GM12878 (cell line): ENCODE measurements at regions of chr14 and their contacts with region 1.

Region 1: GRCh38 chr14:78448164-78449094 is 278.3 kb downstream of the NRXN3 start:
- DNase-seq: peak; percentile 45
- ATAC-seq: peak; percentile 87
- H3K4me3 ChIP-seq: no peak overlapping the region
- H3K27ac ChIP-seq: no peak overlapping the region
- H3K4me1 ChIP-seq: peaks cover 5% of the 10 kb centered on the region
- H3K27me3 ChIP-seq: no peaks in the 10 kb centered on the region
- CTCF ChIP-seq: peak; percentile 68 to 91 (median 89)
- EP300 ChIP-seq: no peak
- POLR2A ChIP-seq: no peak
- RAD21 ChIP-seq: peak; percentile 73

Region 2: GRCh38 chr14:78561069-78561468 is 112.6 kb after region 1 on chr14:
- CTCF ChIA-PET with region 1: interaction called, 39 read pairs
- POLR2A ChIA-PET with region 1: no interaction called
- RAD21 ChIA-PET with region 1: interaction called, 14 read pairs
- SMC1A ChIA-PET with region 1: interaction called, 12 read pairs
- in situ Hi-C with region 1: loop called (anchors 5 kb)
- intact Hi-C with region 1: loop called (anchors 1 kb)
- DNase-seq: no peak
- ATAC-seq: no peak
- H3K4me3 ChIP-seq: no peak overlapping the region
- H3K27ac ChIP-seq: no peak overlapping the region
- H3K4me1 ChIP-seq: no peaks in the 10 kb centered on the region
- H3K27me3 ChIP-seq: no peaks in the 10 kb centered on the region
- CTCF ChIP-seq: no peak
- EP300 ChIP-seq: no peak
- POLR2A ChIP-seq: no peak
- RAD21 ChIP-seq: no peak

Region 3: DNA sequence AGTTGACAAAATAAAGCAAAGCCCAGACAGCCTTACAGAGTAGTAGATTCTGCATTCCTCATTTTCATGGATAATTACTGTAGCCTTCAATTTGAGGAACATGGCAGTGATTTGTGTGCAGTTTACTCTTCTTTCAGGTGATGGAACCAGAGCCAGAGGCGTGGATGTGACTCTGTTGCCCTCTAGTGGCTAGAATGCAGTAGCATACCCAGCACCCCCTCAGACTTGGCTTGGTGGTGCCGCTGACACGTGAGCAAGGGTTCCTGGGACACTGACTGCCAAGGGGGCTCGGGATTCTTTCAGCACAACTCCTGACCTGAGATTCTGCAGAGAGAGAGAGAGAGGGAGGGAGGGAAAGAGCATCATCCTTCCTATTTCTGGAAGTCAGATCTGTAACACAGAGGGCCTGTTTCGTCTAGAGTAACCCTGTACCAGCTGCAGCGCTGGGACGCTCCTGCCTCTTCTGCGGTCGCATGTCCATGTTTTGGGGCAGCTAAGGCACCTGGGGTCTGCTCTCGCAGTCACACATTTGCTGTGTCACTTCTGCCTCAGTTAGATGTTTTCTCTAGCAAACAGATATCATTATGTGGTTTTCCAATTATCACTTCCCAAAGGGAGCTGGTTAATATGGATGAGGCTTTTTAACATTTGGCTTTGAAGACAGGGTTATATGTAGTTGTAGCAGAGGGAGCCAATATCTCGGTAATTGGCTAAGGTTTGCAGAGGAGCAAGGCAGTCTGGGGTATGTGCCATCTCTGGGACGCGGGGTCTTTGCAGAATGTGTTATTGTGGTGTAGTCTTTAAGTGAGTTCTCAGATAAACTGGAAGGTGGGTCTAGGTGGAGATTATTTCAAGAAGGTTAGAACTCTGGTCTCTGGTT is 149.9 kb after region 1 on chr14:
- CTCF ChIA-PET with region 1: interaction called, 14 read pairs
- POLR2A ChIA-PET with region 1: no interaction called
- RAD21 ChIA-PET with region 1: interaction called, 4 read pairs
- SMC1A ChIA-PET with region 1: interaction called, 9 read pairs
- in situ Hi-C with region 1: no loop called
- intact Hi-C with region 1: loop called (anchors 2 kb)
- DNase-seq: no peak
- ATAC-seq: peak; percentile 99
- H3K4me3 ChIP-seq: no peak overlapping the region
- H3K27ac ChIP-seq: no peak overlapping the region
- H3K4me1 ChIP-seq: no peaks in the 10 kb centered on the region
- H3K27me3 ChIP-seq: no peaks in the 10 kb centered on the region
- CTCF ChIP-seq: peak; percentile 94 to 96 (median 94)
- EP300 ChIP-seq: no peak
- POLR2A ChIP-seq: no peak
- RAD21 ChIP-seq: peak; percentile 87

Region 4: GRCh38 chr14:78697341-78697740 is 248.9 kb after region 1 on chr14:
- CTCF ChIA-PET with region 1: interaction called, 3 read pairs
- POLR2A ChIA-PET with region 1: no interaction called
- RAD21 ChIA-PET with region 1: no interaction called
- SMC1A ChIA-PET with region 1: no interaction called
- in situ Hi-C with region 1: no loop called
- intact Hi-C with region 1: loop called (anchors 1 kb)
- DNase-seq: no peak
- ATAC-seq: peak; percentile 67
- H3K4me3 ChIP-seq: no peak overlapping the region
- H3K27ac ChIP-seq: no peak overlapping the region
- H3K4me1 ChIP-seq: no peaks in the 10 kb centered on the region
- H3K27me3 ChIP-seq: no peaks in the 10 kb centered on the region
- CTCF ChIP-seq: peak; percentile 47 to 53 (median 52)
- EP300 ChIP-seq: no peak
- POLR2A ChIP-seq: no peak
- RAD21 ChIP-seq: peak; percentile 65

Region 5: DNA sequence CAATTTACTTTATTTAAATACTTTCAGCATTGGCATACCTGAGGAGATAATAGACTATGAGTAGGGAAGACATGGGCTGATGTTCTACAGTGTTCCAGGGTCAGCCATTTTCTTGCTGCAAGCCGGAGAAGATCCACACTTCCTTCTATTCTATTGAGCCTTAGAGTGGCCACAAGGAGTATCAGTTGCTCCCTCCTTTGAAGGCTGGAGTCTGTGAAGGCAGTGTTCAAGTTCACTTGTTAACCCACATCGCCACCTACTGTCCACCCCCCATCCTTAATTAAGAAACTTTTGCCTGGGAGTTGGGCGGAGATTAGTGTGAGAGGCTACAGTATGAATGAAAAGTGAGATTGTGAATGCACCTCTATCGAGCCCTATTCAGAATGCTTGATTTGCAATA is 388.3 kb after region 1 on chr14:
- CTCF ChIA-PET with region 1: interaction called, 3 read pairs
- POLR2A ChIA-PET with region 1: no interaction called
- RAD21 ChIA-PET with region 1: no interaction called
- SMC1A ChIA-PET with region 1: no interaction called
- in situ Hi-C with region 1: no loop called
- intact Hi-C with region 1: loop called (anchors 1 kb)
- DNase-seq: peak; percentile 17
- ATAC-seq: peak; percentile 91
- H3K4me3 ChIP-seq: no peak overlapping the region
- H3K27ac ChIP-seq: no peak overlapping the region
- H3K4me1 ChIP-seq: no peaks in the 10 kb centered on the region
- H3K27me3 ChIP-seq: no peaks in the 10 kb centered on the region
- CTCF ChIP-seq: peak; percentile 51 to 67 (median 63)
- EP300 ChIP-seq: no peak
- POLR2A ChIP-seq: no peak
- RAD21 ChIP-seq: peak; percentile 73